CD8-positive, alpha-beta T cell (primary cell): ENCODE measurements at regions of chr10 and their contacts with region 1.

Region 1: DNA sequence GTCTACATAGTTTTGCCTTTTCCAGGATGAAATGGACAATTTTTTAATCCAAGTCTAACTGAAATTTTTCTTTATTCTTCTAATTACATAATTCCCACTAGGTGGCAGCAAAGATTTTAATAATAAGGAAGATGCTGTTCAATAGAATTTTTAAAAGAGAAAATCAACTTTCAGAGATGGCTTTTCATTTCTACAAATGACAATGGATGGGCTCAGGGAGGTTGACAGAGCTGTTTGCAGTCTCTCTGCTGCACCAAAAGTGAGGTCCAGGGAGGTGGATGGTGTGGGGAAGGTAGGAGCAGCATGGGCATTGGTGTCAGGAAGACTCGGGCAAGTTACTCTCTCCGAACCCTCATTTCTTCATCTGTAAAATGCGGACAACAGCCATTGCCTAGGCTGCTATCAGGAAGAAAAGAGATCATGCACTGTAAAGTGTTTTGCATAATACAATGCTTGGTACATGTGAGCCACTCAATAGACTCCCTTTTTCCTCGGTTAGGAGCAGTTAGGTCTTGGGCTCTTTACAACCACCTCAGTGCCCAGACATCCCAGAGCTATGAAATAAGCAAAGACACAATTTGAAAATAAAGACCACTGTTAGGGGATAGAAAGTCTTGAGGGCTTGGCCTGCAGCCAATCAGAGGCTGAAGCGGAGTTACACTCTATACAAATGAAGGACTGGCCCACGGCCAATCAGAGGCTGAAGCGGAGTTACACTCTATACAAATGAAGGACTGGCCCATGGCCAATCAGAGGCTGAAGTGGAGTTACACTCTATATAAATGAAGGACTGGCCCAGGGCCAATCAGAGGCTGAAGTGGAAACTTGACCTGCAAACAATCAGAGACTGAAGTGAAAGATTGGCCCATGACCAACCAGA is 107.1 kb downstream of the ABLIM1 start:
- DNase-seq: peak in 1 of 9 experiments; percentile 53
- ATAC-seq: no peak
- H3K4me3 ChIP-seq: no peak overlapping the region
- H3K4me3 Mint-ChIP-seq: no peak overlapping the region
- H3K27ac ChIP-seq: no peak overlapping the region
- H3K27ac Mint-ChIP-seq: no peak overlapping the region
- H3K4me1 ChIP-seq: peaks cover 30% of the 10 kb centered on the region
- H3K4me1 Mint-ChIP-seq: peaks cover 34% of the 10 kb centered on the region
- H3K27me3 ChIP-seq: no peaks in the 10 kb centered on the region
- H3K27me3 Mint-ChIP-seq: no peaks in the 10 kb centered on the region
- CTCF ChIP-seq: peak; percentile 80

Region 2: DNA sequence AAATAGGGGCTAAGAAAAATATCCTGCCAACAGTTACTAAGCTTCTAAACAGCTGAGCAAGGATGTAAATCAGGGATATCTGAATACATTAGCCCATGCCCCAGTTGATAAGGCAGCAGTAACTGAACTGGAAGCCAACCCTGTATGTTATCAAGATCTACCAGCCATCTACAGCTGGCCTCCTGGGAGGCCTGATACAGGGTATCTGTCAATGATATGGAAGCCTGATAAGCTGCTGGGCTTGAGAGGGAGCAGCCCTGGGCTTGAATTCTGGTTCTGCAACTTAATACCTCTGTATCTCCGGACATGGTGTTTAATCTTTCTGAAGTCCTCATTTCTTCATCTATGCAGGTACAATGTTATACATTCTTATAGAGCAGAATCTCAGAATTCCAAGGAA is 108.9 kb before region 1 on chr10:
- CTCF ChIA-PET with region 1: no interaction called
- POLR2A ChIA-PET with region 1: no interaction called
- intact Hi-C with region 1: no loop called
- DNase-seq: no peak
- ATAC-seq: no peak
- H3K4me3 ChIP-seq: no peak overlapping the region
- H3K4me3 Mint-ChIP-seq: no peak overlapping the region
- H3K27ac ChIP-seq: no peak overlapping the region
- H3K27ac Mint-ChIP-seq: no peak overlapping the region
- H3K4me1 ChIP-seq: no peaks in the 10 kb centered on the region
- H3K4me1 Mint-ChIP-seq: no peaks in the 10 kb centered on the region
- H3K27me3 ChIP-seq: no peaks in the 10 kb centered on the region
- H3K27me3 Mint-ChIP-seq: no peaks in the 10 kb centered on the region
- CTCF ChIP-seq: no peak

Region 3: DNA sequence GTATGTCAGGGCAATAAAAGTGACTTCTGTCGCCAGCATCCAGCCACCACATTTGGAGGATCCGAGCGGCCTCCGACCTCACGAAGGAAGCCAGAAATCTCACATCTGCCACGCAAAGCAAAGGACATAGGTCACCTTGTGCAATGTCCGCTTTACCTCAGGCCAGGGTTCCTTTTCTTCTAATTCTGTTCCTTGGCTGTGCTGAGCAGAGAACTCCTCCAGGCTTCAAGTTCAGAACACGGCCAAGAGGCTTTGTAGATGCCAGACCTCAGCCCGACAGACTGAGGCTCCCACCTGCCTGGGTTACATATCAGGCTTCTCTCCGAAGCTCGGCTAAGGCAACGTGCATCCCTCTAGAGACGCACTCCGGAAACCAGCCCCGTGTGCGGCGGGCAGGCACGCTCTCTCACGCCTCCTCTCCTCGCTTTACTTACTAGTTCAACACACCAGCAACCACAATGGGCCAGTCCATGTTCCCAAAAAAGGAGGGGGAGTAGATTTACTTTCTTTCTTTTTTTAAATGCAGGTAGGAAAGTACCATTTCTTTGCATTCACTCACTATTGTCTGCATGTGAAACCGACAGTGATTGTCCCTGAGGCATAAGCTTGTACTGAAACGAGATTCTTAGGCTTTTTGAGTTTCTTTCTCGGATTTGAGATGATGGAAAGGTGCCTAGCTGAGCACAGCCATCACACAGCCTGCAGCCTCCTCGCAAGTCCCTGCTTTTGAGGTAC is 24.3 kb before region 1 on chr10:
- CTCF ChIA-PET with region 1: interaction called, 312 read pairs
- POLR2A ChIA-PET with region 1: interaction called, 209 read pairs
- intact Hi-C with region 1: no loop called
- DNase-seq: peak; percentile 80 to 98 (median 90)
- ATAC-seq: peak; percentile 86
- H3K4me3 ChIP-seq: peak overlapping the region; percentile 69 to 70
- H3K4me3 Mint-ChIP-seq: peak overlapping the region; percentile 92
- H3K27ac ChIP-seq: peak overlapping the region; percentile 89 to 93
- H3K27ac Mint-ChIP-seq: peak overlapping the region; percentile 97
- H3K4me1 ChIP-seq: peaks cover 47% of the 10 kb centered on the region
- H3K4me1 Mint-ChIP-seq: peaks cover 59% of the 10 kb centered on the region
- H3K27me3 ChIP-seq: no peaks in the 10 kb centered on the region
- H3K27me3 Mint-ChIP-seq: no peaks in the 10 kb centered on the region
- CTCF ChIP-seq: no peak

Region 4: DNA sequence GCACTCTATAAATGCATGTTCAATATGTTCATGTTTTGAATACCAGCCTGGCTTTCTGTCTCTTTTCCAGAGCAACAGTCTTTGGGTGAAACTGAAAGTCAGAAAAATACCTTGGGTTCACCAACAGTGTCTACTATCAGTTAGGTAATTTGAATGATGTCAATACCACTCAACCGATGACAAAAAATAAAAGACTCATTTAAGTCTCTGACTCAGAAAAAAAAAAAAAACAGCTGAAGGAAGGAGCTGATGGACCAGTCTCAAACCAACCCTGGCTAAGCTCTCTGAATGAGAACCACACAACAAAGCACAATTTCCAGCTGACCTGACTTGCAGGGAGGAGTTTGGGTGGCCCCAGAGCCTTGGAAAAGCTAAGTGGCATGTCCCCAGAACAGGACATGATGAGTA is 64.6 kb after region 1 on chr10:
- CTCF ChIA-PET with region 1: no interaction called
- POLR2A ChIA-PET with region 1: no interaction called
- intact Hi-C with region 1: no loop called
- DNase-seq: no peak
- ATAC-seq: peak; percentile 20
- H3K4me3 ChIP-seq: no peak overlapping the region
- H3K4me3 Mint-ChIP-seq: no peak overlapping the region
- H3K27ac ChIP-seq: no peak overlapping the region
- H3K27ac Mint-ChIP-seq: no peak overlapping the region
- H3K4me1 ChIP-seq: no peaks in the 10 kb centered on the region
- H3K4me1 Mint-ChIP-seq: no peaks in the 10 kb centered on the region
- H3K27me3 ChIP-seq: no peaks in the 10 kb centered on the region
- H3K27me3 Mint-ChIP-seq: no peaks in the 10 kb centered on the region
- CTCF ChIP-seq: no peak

Region 5: DNA sequence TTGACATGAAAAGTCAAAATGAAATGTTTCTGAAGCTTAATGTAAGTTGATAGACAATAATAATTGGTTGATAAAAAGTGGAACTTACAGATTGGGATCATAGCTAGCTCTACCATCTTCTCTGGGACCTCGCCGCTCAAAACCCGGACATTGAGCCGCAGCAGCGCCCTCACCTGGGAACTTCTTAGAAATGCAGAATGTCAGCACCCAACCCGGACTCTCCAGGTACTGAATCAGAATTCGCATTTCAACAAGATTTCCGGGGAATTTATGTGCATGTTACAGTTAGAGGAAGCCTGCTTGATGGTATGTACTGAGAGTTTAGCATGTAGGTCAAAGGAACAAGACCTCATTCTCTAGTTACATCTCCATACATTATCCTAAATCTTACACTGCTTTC is 143.8 kb after region 1 on chr10:
- CTCF ChIA-PET with region 1: interaction called, 9 read pairs
- POLR2A ChIA-PET with region 1: no interaction called
- intact Hi-C with region 1: loop called in 1 of 2 experiments (anchors 1 kb)
- DNase-seq: peak in 5 of 9 experiments; percentile 13 to 49 (median 34)
- ATAC-seq: peak; percentile 44
- H3K4me3 ChIP-seq: no peak overlapping the region
- H3K4me3 Mint-ChIP-seq: no peak overlapping the region
- H3K27ac ChIP-seq: no peak overlapping the region
- H3K27ac Mint-ChIP-seq: no peak overlapping the region
- H3K4me1 ChIP-seq: peaks cover 5% of the 10 kb centered on the region
- H3K4me1 Mint-ChIP-seq: peaks cover 13% of the 10 kb centered on the region
- H3K27me3 ChIP-seq: no peaks in the 10 kb centered on the region
- H3K27me3 Mint-ChIP-seq: peaks cover 11% of the 10 kb centered on the region
- CTCF ChIP-seq: peak; percentile 31

Region 6: GRCh38 chr10:114779803-114780609 is 229.0 kb after region 1 on chr10:
- CTCF ChIA-PET with region 1: interaction called, 4 read pairs
- POLR2A ChIA-PET with region 1: no interaction called
- intact Hi-C with region 1: loop called in 1 of 2 experiments (anchors 5 kb)
- DNase-seq: no peak
- ATAC-seq: no peak
- H3K4me3 ChIP-seq: no peak overlapping the region
- H3K4me3 Mint-ChIP-seq: no peak overlapping the region
- H3K27ac ChIP-seq: no peak overlapping the region
- H3K27ac Mint-ChIP-seq: no peak overlapping the region
- H3K4me1 ChIP-seq: no peaks in the 10 kb centered on the region
- H3K4me1 Mint-ChIP-seq: no peaks in the 10 kb centered on the region
- H3K27me3 ChIP-seq: no peaks in the 10 kb centered on the region
- H3K27me3 Mint-ChIP-seq: peaks cover 11% of the 10 kb centered on the region
- CTCF ChIP-seq: no peak

Region 7: DNA sequence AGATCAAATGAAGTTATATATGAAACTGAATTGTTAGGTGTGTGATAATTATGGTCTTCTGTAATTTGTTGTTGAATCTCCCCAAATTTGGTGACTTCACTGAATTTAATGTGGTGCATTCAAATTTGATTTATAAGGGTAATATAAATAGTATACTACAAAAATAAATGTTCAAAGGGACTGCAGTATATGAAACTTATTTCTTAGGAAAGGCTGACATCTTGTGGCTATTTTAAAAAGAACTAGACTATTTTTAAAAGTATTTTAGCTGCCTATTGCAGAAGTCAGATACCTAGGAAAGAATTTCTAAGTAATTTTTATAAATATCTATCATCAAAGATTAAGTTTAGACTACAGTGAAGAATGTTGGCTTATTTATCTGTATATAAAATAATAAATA is 578.8 kb after region 1 on chr10:
- CTCF ChIA-PET with region 1: no interaction called
- POLR2A ChIA-PET with region 1: no interaction called
- intact Hi-C with region 1: loop called (anchors 2 to 5 kb)
- DNase-seq: peak in 2 of 9 experiments; percentile 24 to 40
- ATAC-seq: no peak
- H3K4me3 ChIP-seq: no peak overlapping the region
- H3K4me3 Mint-ChIP-seq: no peak overlapping the region
- H3K27ac ChIP-seq: no peak overlapping the region
- H3K27ac Mint-ChIP-seq: no peak overlapping the region
- H3K4me1 ChIP-seq: no peaks in the 10 kb centered on the region
- H3K4me1 Mint-ChIP-seq: no peaks in the 10 kb centered on the region
- H3K27me3 ChIP-seq: no peaks in the 10 kb centered on the region
- H3K27me3 Mint-ChIP-seq: peaks cover 5% of the 10 kb centered on the region
- CTCF ChIP-seq: peak; percentile 25